Adrenal gland (tissue), 19 donors: ENCODE measurements at regions of chr3 and their contacts with region 1.

Region 1: DNA sequence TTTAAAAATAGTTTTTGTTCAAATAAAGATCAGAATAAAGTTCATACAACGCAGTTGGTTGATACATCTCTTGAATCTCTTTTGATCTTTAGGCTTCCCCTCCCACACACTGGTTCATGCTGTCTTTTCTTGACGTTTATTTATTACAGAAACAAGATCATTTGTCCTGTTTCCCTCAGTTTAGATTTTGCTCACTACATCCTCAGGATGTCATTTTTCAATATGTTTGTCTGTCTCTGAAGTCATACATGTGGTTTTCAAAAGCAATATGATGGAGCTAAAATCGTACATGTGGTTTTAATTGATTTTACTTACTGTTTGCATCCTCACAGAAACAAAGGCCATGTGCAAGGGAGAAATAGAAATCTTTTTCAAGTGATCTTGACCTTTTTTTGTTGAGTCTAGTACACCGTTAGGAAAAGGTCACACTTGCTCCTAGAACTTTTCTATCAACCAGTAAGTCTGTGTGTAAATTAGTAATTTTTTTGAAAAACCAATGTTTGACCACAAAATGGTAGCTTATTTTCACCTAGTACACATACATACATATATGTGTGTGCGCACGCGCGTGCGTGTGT is 63.7 kb upstream of the SENP5 start:
- DNase-seq: no peak
- H3K4me3 ChIP-seq: no peak overlapping the region
- H3K27ac ChIP-seq: no peak overlapping the region
- H3K4me1 ChIP-seq: no peaks in the 10 kb centered on the region
- H3K27me3 ChIP-seq: no peaks in the 10 kb centered on the region
- CTCF ChIP-seq: no peak
- POLR2A ChIP-seq: no peak

Region 2: GRCh38 chr3:196739671-196740480 is 64.1 kb before region 1 on chr3 and contains the start of gene PAK2:
- intact Hi-C with region 1: loop called in 1 of 2 experiments (anchors 10 kb)
- DNase-seq: peak; percentile 90 to 94 (median 92)
- H3K4me3 ChIP-seq: peak within 1 kb of the TSS; percentile 75 to 99 (median 84)
- H3K27ac ChIP-seq: peak within 1 kb of the TSS; percentile 93 to 99 (median 95)
- H3K4me1 ChIP-seq: peaks cover 6 to 16% of the 10 kb centered on the region in 2 donors
- H3K27me3 ChIP-seq: no peaks in the 10 kb centered on the region
- CTCF ChIP-seq: peak in 1 of 6 experiments; percentile 19
- POLR2A ChIP-seq: peak in 1 of 2 donors; percentile 74
- total RNA-seq, gene PAK2: 22.1 to 62.0 (median 51.4) TPM

Region 3: DNA sequence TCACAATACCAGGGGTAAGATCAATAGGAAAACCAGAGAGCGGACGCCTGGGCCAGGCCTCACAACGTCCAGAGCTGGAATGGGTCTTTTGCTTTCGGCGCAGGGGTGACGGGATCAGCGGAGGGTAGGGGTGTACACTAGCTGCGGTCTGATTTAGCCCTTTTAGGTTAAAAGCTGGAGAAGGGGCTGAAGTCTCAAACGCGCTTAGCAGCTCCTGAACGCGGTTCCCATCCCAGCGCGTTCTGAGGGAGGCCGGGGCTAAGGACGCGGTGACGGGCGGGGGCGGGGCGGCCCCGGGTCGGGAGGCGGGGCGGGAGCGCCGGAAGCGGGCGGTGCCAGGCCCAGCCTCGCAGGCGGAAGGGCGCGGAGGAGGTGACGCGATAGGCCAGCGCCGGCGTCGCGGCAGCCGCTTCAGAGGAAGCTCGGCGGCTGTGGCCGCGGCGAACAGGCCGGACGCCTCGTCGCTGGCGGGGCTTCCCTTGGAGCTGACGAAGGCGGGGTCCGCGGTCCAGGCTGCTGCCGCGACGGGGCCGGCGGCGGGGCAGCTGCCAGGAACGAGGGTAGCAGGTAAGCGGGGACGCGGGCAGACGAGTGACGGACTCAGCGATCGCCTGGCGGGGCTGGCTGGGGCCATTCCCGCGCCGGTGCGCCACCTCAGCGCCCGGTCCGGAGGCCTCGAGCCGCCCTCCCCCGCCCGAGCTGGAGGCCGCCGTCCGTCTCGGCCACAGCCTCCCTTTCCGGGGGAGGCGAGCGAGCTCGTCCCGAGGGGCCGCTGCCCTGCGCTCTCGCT is 63.7 kb after region 1 on chr3 and contains the start of gene SENP5:
- intact Hi-C with region 1: no loop called
- DNase-seq: peak; percentile 89 to 94 (median 91)
- H3K4me3 ChIP-seq: peak within 1 kb of the TSS; percentile 75 to 100 (median 94)
- H3K27ac ChIP-seq: peak within 1 kb of the TSS; percentile 80 to 99 (median 97)
- H3K4me1 ChIP-seq: peaks cover 9 to 22% of the 10 kb centered on the region in 2 donors
- H3K27me3 ChIP-seq: no peaks in the 10 kb centered on the region
- CTCF ChIP-seq: no peak
- POLR2A ChIP-seq: peak; percentile 97
- total RNA-seq, gene SENP5: 15.8 to 41.6 (median 23.9) TPM